ENCODE measurements at regions of chr10 and their contacts with region 1.

Region 1: GRCh38 chr10:128793726-128794655 is 667.8 kb upstream of the MKI67 start:
- DNase-seq: no peak
- ATAC-seq: no peak
- H3K4me3 Mint-ChIP-seq: no peak overlapping the region
- H3K27ac Mint-ChIP-seq: no peak overlapping the region
- H3K4me1 Mint-ChIP-seq: no peaks in the 10 kb centered on the region
- H3K27me3 Mint-ChIP-seq: peaks cover 2% of the 10 kb centered on the region

Region 2: DNA sequence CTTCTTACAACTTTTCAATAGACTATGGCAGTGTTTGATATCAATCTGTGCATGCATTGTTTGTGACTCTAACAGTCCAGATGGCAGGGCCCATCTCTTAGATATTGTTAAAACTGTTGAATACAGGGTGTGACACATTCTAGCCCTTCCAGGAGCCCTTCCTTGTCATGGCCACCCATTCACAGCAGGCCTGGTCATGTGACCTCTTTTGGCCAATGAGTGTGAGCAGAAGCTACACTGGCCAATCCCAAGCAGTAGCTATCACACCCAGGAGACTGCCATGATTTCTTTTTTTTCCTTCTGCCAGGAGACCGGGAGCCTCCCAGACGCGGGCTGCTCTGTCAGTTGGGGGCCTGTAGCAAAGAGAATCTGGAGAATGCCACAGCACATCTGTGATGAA is 12.4 kb before region 1 on chr10:
- CTCF ChIA-PET with region 1: no interaction called
- POLR2A ChIA-PET with region 1: no interaction called
- intact Hi-C with region 1: loop called in 1 of 2 experiments (anchors 1 kb)
- DNase-seq: no peak
- ATAC-seq: no peak
- H3K4me3 Mint-ChIP-seq: no peak overlapping the region
- H3K27ac Mint-ChIP-seq: no peak overlapping the region
- H3K4me1 Mint-ChIP-seq: no peaks in the 10 kb centered on the region
- H3K27me3 Mint-ChIP-seq: peaks cover 3% of the 10 kb centered on the region

Measured in activated CD4-positive, alpha-beta T cell treated with anti-CD3 and anti-CD28 coated beads for 36 hours (primary cell).